Right lobe of liver (tissue), 6 donors: ENCODE measurements at regions of chr12 and their contacts with region 1.

Region 1: DNA sequence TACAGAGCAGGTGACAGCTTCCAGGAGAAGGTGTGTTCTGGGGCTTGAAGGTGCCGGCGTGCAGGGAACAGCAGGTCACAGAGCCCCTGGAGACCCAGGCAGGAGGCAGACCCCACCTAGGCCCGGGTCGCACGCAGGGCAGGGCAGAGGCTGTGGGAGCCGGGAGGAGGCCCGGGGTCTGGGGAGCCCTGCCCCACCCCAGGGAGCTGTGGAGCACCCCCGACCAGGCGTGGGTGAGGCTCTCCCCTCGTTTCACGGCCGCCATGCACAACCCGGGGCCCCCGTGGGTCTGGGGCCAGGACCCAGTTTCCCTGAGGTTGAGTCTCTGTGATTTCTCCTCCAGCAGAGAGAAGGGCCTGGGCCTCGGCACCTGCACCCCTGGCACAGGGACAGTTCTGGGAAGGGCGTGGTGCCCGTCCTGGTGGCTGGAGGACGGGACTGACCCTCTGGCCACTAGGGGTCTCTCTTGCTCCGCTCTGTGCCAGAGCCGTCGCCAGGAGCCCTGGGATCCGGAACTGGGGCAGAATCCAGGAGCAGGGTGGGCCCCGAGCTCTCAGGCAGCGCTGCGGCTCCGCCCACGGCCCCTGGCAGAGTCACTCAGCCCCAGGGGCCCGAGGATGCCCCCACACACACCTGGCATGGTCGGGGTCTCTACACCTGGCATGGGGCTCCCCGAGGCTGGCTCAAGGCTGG is 75.2 kb upstream of the FBRSL1 start:
- DNase-seq: peak; percentile 84 to 85 (median 84)
- ATAC-seq: peak; percentile 95 to 99 (median 98)
- H3K4me3 ChIP-seq: no peak overlapping the region
- H3K27ac ChIP-seq: no peak overlapping the region
- H3K4me1 ChIP-seq: peaks cover 0 to 5% (median 0%) of the 10 kb centered on the region in 4 donors
- H3K27me3 ChIP-seq: no peaks in the 10 kb centered on the region
- CTCF ChIP-seq: peak; percentile 94 to 96 (median 95)
- POLR2A ChIP-seq: no peak

Region 2: DNA sequence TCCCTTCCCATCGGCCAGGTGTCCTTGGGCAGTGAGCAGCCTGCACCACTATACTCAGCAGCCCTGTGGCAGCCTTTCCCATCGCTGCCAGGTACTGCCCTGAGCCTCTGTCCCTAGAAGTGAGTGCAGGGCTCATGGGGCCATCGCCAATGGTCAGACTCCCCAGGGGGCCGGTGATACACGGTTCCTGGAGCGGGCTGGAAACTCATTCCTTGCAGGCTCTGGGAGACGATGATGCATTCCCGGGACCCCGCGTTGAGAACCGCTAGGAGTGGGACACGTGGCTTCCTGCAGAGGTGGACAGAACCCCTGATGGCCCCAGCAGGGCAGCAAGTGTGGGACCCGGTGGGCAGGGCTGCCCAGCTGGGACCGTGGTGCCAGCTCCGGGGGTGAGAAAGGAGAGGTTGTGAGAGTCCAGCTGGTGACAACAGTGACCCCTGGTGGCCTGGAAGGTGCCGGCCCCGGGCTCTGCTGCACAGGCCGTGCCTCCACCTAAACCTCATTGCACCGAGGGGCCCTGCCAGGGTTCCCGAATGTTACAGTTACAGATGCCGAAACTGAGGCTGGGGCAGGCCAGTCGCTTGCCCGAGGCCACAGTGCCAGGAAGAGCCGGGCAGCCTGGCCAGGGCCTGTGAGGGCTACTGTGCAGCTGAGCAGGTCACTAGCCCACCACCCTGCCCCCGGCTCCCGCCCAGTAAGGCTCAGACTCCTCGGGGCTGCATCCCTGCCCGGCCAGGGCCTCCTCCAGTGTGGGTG is 109.0 kb after region 1 on chr12:
- intact Hi-C with region 1: loop called (anchors 5 kb)
- DNase-seq: peak; percentile 69 to 81 (median 78)
- ATAC-seq: peak; percentile 73 to 91 (median 85)
- H3K4me3 ChIP-seq: no peak overlapping the region
- H3K27ac ChIP-seq: no peak overlapping the region
- H3K4me1 ChIP-seq: no peaks in the 10 kb centered on the region
- H3K27me3 ChIP-seq: no peaks in the 10 kb centered on the region
- CTCF ChIP-seq: peak; percentile 75 to 92 (median 84)
- POLR2A ChIP-seq: no peak

Region 3: DNA sequence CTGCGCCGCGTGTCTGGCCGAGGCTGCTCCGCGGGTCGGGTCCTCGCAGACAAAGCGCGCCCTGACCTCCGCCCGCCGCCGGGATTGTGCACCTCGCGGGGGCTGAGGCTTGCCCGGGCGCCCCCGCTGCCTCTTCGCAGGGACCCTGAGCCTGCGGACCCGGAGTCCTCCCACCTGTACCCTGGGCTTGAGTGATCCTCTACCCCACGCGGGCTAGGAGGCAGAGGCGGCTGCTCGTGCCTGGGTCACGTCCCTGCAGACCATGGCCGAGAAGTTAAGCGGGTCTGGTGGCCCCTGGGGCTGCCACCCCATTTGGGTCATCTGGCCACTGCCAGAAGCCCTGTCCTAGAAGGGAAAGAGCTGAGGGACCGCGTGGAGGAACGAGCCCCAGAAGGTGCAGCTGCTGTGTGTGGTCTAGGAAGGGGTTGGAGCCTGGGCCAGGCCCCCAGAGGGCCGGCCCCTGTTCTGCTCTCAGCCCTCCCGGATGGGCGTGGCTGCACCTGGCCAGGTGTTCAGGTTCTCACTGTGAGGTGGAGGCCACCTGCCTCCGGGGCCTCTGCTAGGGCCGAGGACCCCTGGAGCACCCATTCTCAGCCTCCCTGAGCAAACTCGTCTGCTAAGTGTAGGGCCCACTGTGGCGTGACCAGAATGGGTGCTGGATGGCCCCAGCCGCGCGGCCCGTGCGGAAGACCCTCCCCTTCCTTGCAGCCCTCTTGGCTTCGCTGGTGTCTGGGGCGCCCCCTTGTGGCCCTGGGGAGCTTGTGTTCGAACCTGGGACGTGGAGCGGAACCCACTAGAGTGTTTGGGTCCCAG is 146.0 kb after region 1 on chr12:
- intact Hi-C with region 1: loop called in 1 of 2 experiments (anchors 10 kb)
- DNase-seq: no peak
- ATAC-seq: peak; percentile 2 to 30 (median 20)
- H3K4me3 ChIP-seq: peak overlapping the region; percentile 58 to 60 (median 58)
- H3K27ac ChIP-seq: no peak overlapping the region
- H3K4me1 ChIP-seq: peaks cover 0 to 14% (median 3%) of the 10 kb centered on the region in 4 donors
- H3K27me3 ChIP-seq: no peaks in the 10 kb centered on the region
- CTCF ChIP-seq: peak; percentile 48 to 61 (median 51)
- POLR2A ChIP-seq: no peak

Region 4: DNA sequence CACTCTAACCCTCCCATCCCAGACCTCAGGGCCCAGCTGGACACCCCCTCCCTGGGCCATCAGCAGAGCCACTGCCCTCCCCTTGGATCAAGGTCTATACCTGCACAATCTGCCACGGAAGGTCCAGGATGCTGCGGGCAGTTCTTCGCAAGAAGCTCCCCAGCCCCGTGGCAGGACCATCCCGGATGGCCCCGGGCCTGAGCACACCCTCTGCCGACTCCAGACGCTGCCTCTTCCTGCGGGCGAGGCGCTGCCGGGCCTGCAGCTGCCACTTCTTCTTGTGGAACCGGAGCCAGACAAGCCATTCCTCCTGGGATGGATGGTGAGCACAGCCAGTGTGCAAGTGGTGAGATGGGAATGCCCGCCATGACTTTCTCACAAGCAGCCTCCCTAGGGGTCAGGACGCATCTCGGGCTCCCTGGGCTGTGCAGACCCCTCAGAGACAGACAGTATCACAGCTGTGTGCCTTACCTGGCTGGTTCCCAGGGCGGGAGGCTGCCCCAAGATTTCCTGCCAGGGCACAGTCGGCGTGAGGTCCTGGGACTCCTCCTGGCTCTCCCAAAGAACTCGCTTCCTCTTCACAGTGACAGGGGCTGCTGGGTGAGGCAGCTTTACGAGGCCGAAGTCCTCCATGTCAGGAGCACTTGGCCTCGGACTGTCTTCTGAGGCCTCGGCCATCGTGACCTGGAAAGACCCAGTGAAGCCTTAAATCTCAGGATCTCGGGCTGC is 234.6 kb after region 1 on chr12:
- intact Hi-C with region 1: loop called in 1 of 2 experiments (anchors 10 kb)
- DNase-seq: peak in 1 of 3 donors; percentile 49
- ATAC-seq: peak in 1 of 4 donors; percentile 24
- H3K4me3 ChIP-seq: no peak overlapping the region
- H3K27ac ChIP-seq: no peak overlapping the region
- H3K4me1 ChIP-seq: no peaks in the 10 kb centered on the region
- H3K27me3 ChIP-seq: no peaks in the 10 kb centered on the region
- CTCF ChIP-seq: no peak
- POLR2A ChIP-seq: no peak